ENCODE measurements at regions of chr17 and their contacts with region 1.

Region 1: DNA sequence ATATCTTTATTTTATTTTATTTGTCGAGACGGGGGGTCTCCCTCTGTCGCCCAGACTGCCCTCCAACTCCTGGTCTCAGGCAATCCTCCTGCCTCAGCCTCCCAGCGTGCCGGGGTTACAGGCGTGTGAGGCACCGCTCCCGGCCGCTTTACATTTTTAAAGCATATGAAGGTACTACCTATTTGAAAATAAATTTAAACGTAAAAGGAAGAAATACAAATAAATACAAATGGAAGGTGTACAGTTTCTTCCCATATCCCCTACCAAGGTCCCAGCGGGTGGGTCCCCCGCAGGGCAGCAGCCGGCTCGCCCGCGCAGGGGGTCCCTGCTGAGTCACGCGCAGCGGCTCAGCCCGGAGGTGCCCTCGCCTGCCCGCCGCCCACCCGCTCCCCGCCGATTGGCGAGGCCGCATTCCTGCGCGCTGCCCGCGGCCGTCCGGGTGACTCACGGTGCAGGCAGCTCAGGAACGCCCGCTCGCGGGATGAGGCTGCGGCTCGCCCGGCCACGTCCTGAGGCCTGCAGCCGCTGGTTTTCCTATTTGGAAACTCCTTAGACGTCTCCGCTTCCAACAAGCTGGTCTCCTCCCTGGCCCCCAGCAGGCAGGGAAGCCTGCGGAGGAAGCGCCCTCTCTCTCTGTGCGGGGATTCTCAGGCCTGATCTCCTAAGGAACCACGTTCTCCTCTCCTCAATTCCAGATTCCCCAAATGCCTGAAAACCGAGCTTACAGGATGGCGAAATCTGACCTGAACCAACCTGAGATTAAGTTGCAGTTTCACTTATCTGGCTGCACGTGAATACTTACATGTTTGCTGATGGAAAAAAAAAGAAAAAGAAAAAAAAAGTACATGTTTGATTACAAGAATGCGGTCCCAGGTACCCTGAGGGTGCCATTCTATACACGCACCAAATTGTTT is 54.9 kb upstream of the MAP3K14 start:
- DNase-seq: peak; percentile 92
- ATAC-seq: peak; percentile 92
- H3K4me3 ChIP-seq: peak overlapping the region; percentile 32 to 44
- H3K27ac ChIP-seq: peak overlapping the region; percentile 90
- H3K4me1 ChIP-seq: peaks cover 53 to 86% of the 10 kb centered on the region in 2 experiments
- H3K27me3 ChIP-seq: no peaks in the 10 kb centered on the region
- CTCF ChIP-seq: no peak
- POLR2A ChIP-seq: no peak
- RAD21 ChIP-seq: no peak

Region 2: GRCh38 chr17:45317112-45317928 is 54.4 kb before region 1 on chr17:
- CTCF ChIA-PET with region 1: interaction called, 4 read pairs
- POLR2A ChIA-PET with region 1: interaction called, 11 read pairs
- RAD21 ChIA-PET with region 1: interaction called in 1 of 2 experiments, 4 read pairs
- intact Hi-C with region 1: loop called (anchors 1 kb)
- DNase-seq: peak; percentile 100
- ATAC-seq: peak; percentile 78
- H3K4me3 ChIP-seq: peak overlapping the region; percentile 55 to 96
- H3K27ac ChIP-seq: peak overlapping the region; percentile 88
- H3K4me1 ChIP-seq: peaks cover 81 to 89% of the 10 kb centered on the region in 2 experiments
- H3K27me3 ChIP-seq: no peaks in the 10 kb centered on the region
- CTCF ChIP-seq: no peak
- POLR2A ChIP-seq: peak; percentile 25
- RAD21 ChIP-seq: no peak